Astrocyte of the cerebellum (primary cell): ENCODE measurements at regions of chr3 and their contacts with region 1.

Region 1: GRCh38 chr3:43736558-43736995 is 45.8 kb downstream of the ABHD5 start:
- DNase-seq: no peak
- H3K4me3 ChIP-seq: no peak overlapping the region
- CTCF ChIP-seq: no peak

Region 2: DNA sequence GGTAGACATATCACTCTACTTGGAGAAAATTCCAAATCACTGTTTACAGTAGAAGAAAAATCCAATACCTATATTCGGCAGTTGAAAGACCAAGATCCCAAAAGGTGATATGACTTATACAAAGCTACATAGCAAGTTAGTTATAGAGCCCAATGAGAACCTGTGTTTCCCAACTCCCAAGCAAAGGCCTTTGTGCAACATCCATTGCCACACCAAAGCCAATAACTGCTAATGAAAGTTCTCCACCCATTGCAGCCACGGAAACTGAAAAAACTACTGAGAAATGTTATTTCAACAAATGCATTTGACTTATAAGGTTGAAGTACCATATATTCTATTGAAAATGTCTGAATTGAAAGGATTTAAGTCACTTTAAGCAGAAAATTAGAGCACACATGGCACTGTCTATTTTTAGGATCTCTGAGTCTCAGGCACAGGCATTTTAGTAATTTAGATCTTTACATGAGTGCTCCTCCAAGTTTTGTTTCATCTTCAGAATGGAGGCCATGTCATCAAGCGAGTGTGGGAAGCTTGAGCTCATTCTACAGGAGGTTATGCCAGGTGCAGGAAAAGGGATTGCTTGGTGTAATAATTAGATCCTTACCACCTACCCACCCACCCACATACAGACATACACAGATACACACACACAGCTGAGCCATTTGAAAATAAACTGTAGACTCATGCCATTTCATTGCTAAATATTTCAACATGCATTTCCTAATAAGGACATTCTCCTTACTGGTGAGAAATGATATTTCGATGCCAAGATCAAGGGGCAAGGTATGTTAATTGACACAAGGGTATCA is 95.1 kb before region 1 on chr3:
- in situ Hi-C with region 1: loop called (anchors 5 kb)
- DNase-seq: no peak
- H3K4me3 ChIP-seq: no peak overlapping the region
- CTCF ChIP-seq: no peak